ENCODE measurements at regions of chr1 and their contacts with region 1.

Region 1: GRCh38 chr1:223794136-223794880 is 51.4 kb downstream of the TP53BP2 start:
- DNase-seq: peak in 1 of 4 experiments; percentile 33
- ATAC-seq: peak; percentile 46
- H3K4me3 ChIP-seq: no peak overlapping the region
- H3K27ac ChIP-seq: peak overlapping the region; percentile 50
- H3K4me1 ChIP-seq: peaks cover 11 to 43% of the 10 kb centered on the region in 2 experiments
- H3K27me3 ChIP-seq: no peaks in the 10 kb centered on the region
- CTCF ChIP-seq: no peak
- EP300 ChIP-seq: 0 out of 2 replicates have a peak, but pooled peaks have one; percentile 9
- POLR2A ChIP-seq: no peak
- RAD21 ChIP-seq: no peak

Region 2: GRCh38 chr1:223665552-223666312 is 128.6 kb before region 1 on chr1 and contains the start of gene CAPN8:
- CTCF ChIA-PET with region 1: no interaction called
- POLR2A ChIA-PET with region 1: no interaction called
- in situ Hi-C with region 1: no loop called
- intact Hi-C with region 1: no loop called
- DNase-seq: no peak
- ATAC-seq: no peak
- H3K4me3 ChIP-seq: no peak within 1 kb of the TSS
- H3K27ac ChIP-seq: no peak within 1 kb of the TSS
- H3K4me1 ChIP-seq: no peaks in the 10 kb centered on the region
- H3K27me3 ChIP-seq: peaks cover 4 to 42% of the 10 kb centered on the region in 2 experiments
- CTCF ChIP-seq: no peak
- EP300 ChIP-seq: no peak
- POLR2A ChIP-seq: no peak
- RAD21 ChIP-seq: no peak
- polyA plus RNA-seq, gene CAPN8: not detected

Region 3: GRCh38 chr1:223765036-223765718 is 29.1 kb before region 1 on chr1:
- CTCF ChIA-PET with region 1: no interaction called
- POLR2A ChIA-PET with region 1: no interaction called
- in situ Hi-C with region 1: no loop called
- intact Hi-C with region 1: loop called (anchors 5 kb)
- DNase-seq: peak in 2 of 4 experiments; percentile 38 to 58
- ATAC-seq: peak; percentile 74
- H3K4me3 ChIP-seq: no peak overlapping the region
- H3K27ac ChIP-seq: peak overlapping the region; percentile 9; the same call in 2 of the 3 replicates
- H3K4me1 ChIP-seq: peaks cover 8 to 11% of the 10 kb centered on the region in 2 experiments; a peak in 4 of 5 replicates
- H3K27me3 ChIP-seq: no peaks in the 10 kb centered on the region
- CTCF ChIP-seq: no peak
- EP300 ChIP-seq: no peak
- POLR2A ChIP-seq: no peak; the same call in 1 of the 2 replicates
- RAD21 ChIP-seq: no peak